ENCODE measurements at regions of chr16 and their contacts with region 1.

Region 1: GRCh38 chr16:31713071-31713944 is 160.3 kb upstream of the ZNF267 start:
- DNase-seq: peak; percentile 92
- CTCF ChIP-seq: no peak

Region 2: GRCh38 chr16:31507929-31508705 is 205.2 kb before region 1 on chr16 and contains the start of gene RUSF1:
- in situ Hi-C with region 1: loop called (anchors 25 kb)
- DNase-seq: peak; percentile 93
- CTCF ChIP-seq: no peak

Measured in GM13976 (cell line).